Prostate gland (tissue), 2 donors: ENCODE measurements at regions of chr17 and their contacts with region 1.

Region 1: DNA sequence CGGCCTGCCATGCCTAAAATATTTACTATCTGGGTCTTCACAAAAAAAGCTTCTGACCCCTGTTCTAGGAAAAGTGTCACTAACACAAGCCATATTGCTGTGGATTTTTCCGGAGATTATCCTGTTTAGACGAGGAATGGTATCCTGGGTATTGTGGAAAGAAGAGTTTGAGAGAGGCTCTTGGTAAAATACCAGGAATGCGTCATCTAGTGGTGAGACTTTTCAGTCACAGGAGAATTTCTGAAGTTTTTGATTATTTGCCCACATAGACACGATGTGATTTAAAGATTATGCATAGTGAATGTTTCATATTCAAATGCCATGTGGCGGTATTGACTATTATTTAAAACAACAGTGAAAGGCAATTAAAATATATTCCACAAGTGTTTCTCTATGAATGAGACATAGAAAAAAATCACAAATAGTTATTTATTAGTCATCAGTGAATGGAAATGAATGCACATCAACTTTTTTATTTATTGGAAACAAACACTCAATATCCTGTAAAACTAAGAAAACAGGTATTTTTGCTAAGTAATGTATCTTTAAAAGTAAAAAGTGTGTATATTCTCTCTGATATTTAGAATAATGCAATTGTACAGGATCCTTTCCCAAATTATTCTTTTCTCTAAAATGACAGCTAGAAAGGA is 7.8 kb downstream of the KRT28 start:
- DNase-seq: no peak
- H3K4me3 ChIP-seq: no peak overlapping the region
- H3K27ac ChIP-seq: no peak overlapping the region
- H3K4me1 ChIP-seq: no peaks in the 10 kb centered on the region
- H3K27me3 ChIP-seq: no peaks in the 10 kb centered on the region
- CTCF ChIP-seq: peak in 3 of 4 experiments; percentile 53 to 70 (median 70)
- POLR2A ChIP-seq: no peak

Region 2: DNA sequence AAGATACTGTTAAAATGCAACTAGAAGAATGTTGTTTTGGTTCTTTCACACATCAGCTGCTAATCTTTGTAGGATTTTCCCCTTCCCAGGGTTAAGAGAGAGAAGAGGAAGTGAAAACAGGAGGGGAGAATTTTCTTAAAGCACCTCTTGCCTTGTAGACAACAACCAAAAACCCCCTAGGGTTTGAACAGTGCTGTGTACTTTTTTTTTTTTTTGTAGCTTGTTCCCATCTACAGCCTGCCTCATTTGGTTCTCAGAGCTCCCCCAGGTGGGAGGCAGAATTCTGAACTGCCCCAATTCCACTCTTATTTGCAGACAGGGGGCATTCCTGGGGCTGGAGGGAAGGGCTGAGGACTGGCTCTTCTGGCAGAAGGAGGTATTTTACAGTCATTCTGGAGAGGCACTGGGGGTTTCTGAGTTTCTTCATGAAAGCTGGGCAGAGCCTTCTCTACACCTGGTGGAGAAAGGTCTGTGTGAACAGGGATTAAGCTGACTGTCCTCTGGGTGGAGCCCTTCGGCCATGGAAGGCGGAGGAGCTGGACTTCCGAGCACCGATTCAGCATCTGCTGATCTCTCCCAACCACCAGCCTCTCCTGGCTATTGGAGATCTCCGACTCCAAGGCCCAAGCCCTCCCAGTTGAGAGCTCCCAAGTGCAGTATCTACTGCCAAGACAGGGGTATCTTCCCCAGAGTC is 176.5 kb before region 1 on chr17:
- intact Hi-C with region 1: loop called (anchors 10 kb)
- DNase-seq: peak; percentile 34
- H3K4me3 ChIP-seq: no peak overlapping the region
- H3K27ac ChIP-seq: no peak overlapping the region
- H3K4me1 ChIP-seq: peaks cover 8% of the 10 kb centered on the region
- H3K27me3 ChIP-seq: no peaks in the 10 kb centered on the region
- CTCF ChIP-seq: peak in 3 of 4 experiments; percentile 42 to 68 (median 47)
- POLR2A ChIP-seq: no peak

Region 3: DNA sequence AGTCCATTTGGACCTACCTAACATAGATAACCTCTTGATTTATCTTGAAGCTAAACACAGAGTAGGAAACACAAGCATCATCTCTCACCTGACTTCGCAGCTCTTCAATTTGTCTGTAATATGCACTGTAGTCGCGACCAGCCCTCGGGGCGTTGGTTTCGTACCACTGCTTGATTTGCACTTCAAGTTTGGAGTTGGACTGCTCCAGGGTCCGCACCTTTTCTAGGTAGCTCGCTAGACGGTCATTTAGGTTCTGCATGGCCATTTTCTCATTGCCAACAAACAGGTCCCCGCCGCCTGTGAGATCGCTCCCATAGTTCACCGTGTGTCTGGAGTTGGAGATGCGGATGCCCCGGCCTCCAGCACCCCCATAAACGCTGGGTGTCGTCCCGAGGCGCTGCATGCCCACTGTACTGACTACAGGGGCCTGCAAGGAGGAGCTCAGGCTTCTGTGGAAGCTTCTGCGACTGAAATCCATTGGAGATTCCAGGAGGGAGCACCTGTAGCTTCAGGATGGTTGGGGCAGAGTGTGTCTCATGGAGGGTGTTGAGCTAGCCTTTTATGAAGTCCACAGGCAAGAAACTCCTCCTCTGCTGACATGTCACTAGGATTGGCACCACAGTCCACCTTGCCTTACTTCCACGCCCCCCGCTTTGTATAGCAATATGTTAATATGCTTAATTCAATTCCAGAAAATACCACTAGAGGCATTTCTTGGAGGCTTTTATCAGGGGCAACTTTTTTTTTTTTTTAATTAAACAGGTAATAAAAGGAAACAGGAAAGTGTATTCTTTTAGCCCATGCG is 93.0 kb after region 1 on chr17 and contains the start of gene KRT20:
- intact Hi-C with region 1: no loop called
- DNase-seq: no peak
- H3K4me3 ChIP-seq: no peak within 1 kb of the TSS
- H3K27ac ChIP-seq: no peak within 1 kb of the TSS
- H3K4me1 ChIP-seq: no peaks in the 10 kb centered on the region
- H3K27me3 ChIP-seq: no peaks in the 10 kb centered on the region
- CTCF ChIP-seq: no peak
- POLR2A ChIP-seq: no peak
- total RNA-seq, gene KRT20: not detected